HCT116 (cell line): ENCODE measurements at regions of chr12 and their contacts with region 1.

Region 1: GRCh38 chr12:102816816-102817434 is 100.1 kb downstream of the PAH start:
- DNase-seq: peak; percentile 18
- ATAC-seq: peak; percentile 90
- H3K4me3 ChIP-seq: no peak overlapping the region
- H3K27ac ChIP-seq: no peak overlapping the region
- H3K4me1 ChIP-seq: peaks cover 0 to 6% of the 10 kb centered on the region in 2 experiments; a peak in 1 of 4 replicates
- H3K27me3 ChIP-seq: peaks cover 6% of the 10 kb centered on the region; the same call in 1 of the 2 replicates
- CTCF ChIP-seq: peak; percentile 26 to 79 (median 74); a peak in 5 of 6 replicates
- POLR2A ChIP-seq: no peak
- RAD21 ChIP-seq: peak; percentile 49

Region 2: GRCh38 chr12:102331419-102331818 is 485.5 kb before region 1 on chr12:
- CTCF ChIA-PET with region 1: no interaction called
- POLR2A ChIA-PET with region 1: no interaction called
- RAD21 ChIA-PET with region 1: no interaction called
- intact Hi-C with region 1: no loop called
- DNase-seq: no peak
- ATAC-seq: no peak
- H3K4me3 ChIP-seq: no peak overlapping the region
- H3K27ac ChIP-seq: no peak overlapping the region
- H3K4me1 ChIP-seq: no peaks in the 10 kb centered on the region
- H3K27me3 ChIP-seq: no peaks in the 10 kb centered on the region
- CTCF ChIP-seq: no peak
- POLR2A ChIP-seq: no peak
- RAD21 ChIP-seq: no peak

Region 3: GRCh38 chr12:102708108-102708507 is 108.8 kb before region 1 on chr12:
- CTCF ChIA-PET with region 1: no interaction called
- POLR2A ChIA-PET with region 1: no interaction called
- RAD21 ChIA-PET with region 1: no interaction called
- intact Hi-C with region 1: no loop called
- DNase-seq: no peak
- ATAC-seq: no peak
- H3K4me3 ChIP-seq: no peak overlapping the region
- H3K27ac ChIP-seq: no peak overlapping the region
- H3K4me1 ChIP-seq: no peaks in the 10 kb centered on the region
- H3K27me3 ChIP-seq: peaks cover 9% of the 10 kb centered on the region
- CTCF ChIP-seq: no peak
- POLR2A ChIP-seq: no peak
- RAD21 ChIP-seq: no peak

Region 4: DNA sequence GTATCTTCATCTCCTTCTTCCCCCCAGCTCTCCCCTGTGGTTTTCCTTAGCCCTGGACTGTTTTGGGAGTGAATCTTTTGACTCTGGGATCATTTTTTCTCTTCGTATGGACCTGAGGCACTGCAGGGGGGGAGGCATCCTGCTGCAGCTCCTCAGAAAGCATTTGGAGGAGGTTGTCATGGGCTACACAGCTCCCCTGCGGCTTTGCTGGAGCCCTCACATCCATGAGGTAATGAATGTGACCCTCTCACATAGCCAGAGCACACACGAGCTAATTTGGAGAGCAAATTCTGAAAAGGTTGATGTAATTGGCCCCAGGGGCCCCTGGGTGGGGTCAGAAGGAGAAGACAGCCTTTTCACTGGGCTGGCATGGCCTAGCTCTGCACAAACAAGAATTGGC is 10.8 kb before region 1 on chr12:
- CTCF ChIA-PET with region 1: interaction called, 11 read pairs
- POLR2A ChIA-PET with region 1: no interaction called
- RAD21 ChIA-PET with region 1: no interaction called
- intact Hi-C with region 1: no loop called
- DNase-seq: no peak
- ATAC-seq: no peak
- H3K4me3 ChIP-seq: no peak overlapping the region
- H3K27ac ChIP-seq: no peak overlapping the region
- H3K4me1 ChIP-seq: no peaks in the 10 kb centered on the region
- H3K27me3 ChIP-seq: no peaks in the 10 kb centered on the region
- CTCF ChIP-seq: no peak
- POLR2A ChIP-seq: no peak
- RAD21 ChIP-seq: no peak

Region 5: DNA sequence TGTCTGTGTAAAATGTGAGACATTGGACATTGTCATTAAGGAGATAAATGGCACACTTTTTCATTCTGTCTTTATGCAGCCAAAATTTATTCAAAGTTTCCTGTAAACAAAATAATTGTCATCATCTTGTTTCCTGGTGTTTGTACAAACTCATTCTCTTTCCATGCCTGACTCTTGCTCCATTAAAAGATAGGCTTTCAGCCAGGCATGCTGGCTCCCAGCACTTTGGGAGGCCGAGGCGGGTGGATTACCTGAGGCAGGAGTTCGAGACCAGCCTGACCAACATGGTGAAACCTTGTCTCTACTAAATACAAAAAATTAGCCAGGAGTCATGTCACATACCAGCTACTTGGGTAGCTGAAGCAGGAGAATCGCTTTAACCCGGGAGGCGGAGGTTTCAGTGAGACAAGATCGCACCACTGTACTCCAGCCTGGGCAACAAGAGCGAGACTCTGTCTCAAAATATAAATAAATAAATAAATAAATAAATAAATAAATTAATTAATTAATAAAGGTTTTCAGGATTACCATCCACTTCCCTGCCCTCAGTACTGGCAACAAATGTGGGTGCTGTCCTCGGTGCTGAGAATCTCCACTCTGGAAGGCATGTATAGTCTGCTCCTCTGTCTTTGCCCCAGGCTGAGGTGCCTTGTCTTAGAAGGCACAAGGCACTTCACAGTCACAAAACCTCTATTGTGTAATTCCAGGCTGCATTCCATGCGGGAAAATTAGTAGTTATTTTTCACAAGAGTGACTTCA is 16.9 kb after region 1 on chr12:
- CTCF ChIA-PET with region 1: no interaction called
- POLR2A ChIA-PET with region 1: no interaction called
- RAD21 ChIA-PET with region 1: no interaction called
- intact Hi-C with region 1: loop called (anchors 1 kb)
- DNase-seq: no peak
- ATAC-seq: no peak
- H3K4me3 ChIP-seq: no peak overlapping the region
- H3K27ac ChIP-seq: no peak overlapping the region
- H3K4me1 ChIP-seq: no peaks in the 10 kb centered on the region
- H3K27me3 ChIP-seq: peaks cover 8% of the 10 kb centered on the region; the same call in 1 of the 2 replicates
- CTCF ChIP-seq: no peak
- POLR2A ChIP-seq: no peak
- RAD21 ChIP-seq: no peak